Left cardiac atrium (tissue), 4 donors: ENCODE measurements at regions of chr18 and their contacts with region 1.

Region 1: GRCh38 chr18:53698907-53699306 is 525.6 kb downstream of the MBD2 start:
- DNase-seq: peak; percentile 14
- ATAC-seq: peak; percentile 25 to 38

Region 2: GRCh38 chr18:53566626-53567025 is 132.3 kb before region 1 on chr18:
- intact Hi-C with region 1: no loop called
- DNase-seq: no peak
- ATAC-seq: no peak

Region 3: GRCh38 chr18:54119524-54120019 is 420.7 kb after region 1 on chr18:
- intact Hi-C with region 1: loop called in 1 of 2 experiments (anchors 1 kb)
- DNase-seq: no peak
- ATAC-seq: peak; percentile 73

Region 4: DNA sequence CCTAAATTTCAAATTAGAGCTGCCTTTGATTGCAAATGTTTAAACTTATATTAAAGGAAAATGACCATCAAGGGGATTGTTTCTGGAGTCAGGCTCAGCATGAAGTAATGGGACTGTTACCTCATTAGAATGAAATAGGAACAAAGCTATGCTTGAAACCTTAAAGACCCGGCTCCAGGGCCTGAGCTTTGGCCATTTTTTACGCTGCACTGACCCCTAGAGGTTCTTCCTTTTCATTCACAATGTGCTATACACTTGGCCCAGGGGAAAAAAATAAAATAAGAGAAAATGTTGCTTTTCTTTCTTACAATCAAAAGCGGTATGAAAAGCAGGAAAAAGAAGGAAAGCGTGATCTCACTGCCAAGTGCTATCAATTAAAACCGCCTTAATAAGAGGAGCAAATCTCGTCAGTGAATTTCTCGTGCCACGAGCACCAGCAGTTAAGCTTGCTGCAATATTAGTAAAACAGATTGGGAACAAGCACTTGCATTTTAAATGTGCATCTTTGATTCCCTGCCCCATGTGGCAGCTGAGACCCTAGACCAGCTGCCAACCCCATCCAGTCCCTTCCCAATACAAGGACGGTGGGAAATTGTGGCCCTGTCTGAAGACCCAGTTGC is 429.0 kb after region 1 on chr18:
- intact Hi-C with region 1: loop called in 1 of 2 experiments (anchors 5 kb)
- DNase-seq: no peak
- ATAC-seq: peak; percentile 41 to 70